ENCODE measurements at regions of chr2 and their contacts with region 1.

Region 1: GRCh38 chr2:102872388-102872787 is 110.6 kb downstream of the TMEM182 start:
- DNase-seq: no peak
- H3K4me3 ChIP-seq: no peak overlapping the region
- H3K4me3 Mint-ChIP-seq: no peak overlapping the region
- H3K27ac Mint-ChIP-seq: no peak overlapping the region
- H3K4me1 ChIP-seq: no peaks in the 10 kb centered on the region
- H3K4me1 Mint-ChIP-seq: no peaks in the 10 kb centered on the region
- H3K27me3 ChIP-seq: no peaks in the 10 kb centered on the region; the same call in 1 of the 2 replicates
- H3K27me3 Mint-ChIP-seq: peaks cover 4% of the 10 kb centered on the region
- CTCF ChIP-seq: peak; percentile 22 to 37

Region 2: GRCh38 chr2:102841107-102841840 is 31.1 kb before region 1 on chr2:
- CTCF ChIA-PET with region 1: interaction called, 6 read pairs
- POLR2A ChIA-PET with region 1: no interaction called
- intact Hi-C with region 1: loop called (anchors 1 kb)
- DNase-seq: peak; percentile 57 to 65
- H3K4me3 ChIP-seq: no peak overlapping the region
- H3K4me3 Mint-ChIP-seq: no peak overlapping the region
- H3K27ac Mint-ChIP-seq: no peak overlapping the region
- H3K4me1 ChIP-seq: no peaks in the 10 kb centered on the region
- H3K4me1 Mint-ChIP-seq: no peaks in the 10 kb centered on the region
- H3K27me3 ChIP-seq: no peaks in the 10 kb centered on the region
- H3K27me3 Mint-ChIP-seq: no peaks in the 10 kb centered on the region
- CTCF ChIP-seq: peak; percentile 67 to 70

Measured in Caco-2 (cell line).